HCT116 (cell line): ENCODE measurements at regions of chr6 and their contacts with region 1.

Region 1: DNA sequence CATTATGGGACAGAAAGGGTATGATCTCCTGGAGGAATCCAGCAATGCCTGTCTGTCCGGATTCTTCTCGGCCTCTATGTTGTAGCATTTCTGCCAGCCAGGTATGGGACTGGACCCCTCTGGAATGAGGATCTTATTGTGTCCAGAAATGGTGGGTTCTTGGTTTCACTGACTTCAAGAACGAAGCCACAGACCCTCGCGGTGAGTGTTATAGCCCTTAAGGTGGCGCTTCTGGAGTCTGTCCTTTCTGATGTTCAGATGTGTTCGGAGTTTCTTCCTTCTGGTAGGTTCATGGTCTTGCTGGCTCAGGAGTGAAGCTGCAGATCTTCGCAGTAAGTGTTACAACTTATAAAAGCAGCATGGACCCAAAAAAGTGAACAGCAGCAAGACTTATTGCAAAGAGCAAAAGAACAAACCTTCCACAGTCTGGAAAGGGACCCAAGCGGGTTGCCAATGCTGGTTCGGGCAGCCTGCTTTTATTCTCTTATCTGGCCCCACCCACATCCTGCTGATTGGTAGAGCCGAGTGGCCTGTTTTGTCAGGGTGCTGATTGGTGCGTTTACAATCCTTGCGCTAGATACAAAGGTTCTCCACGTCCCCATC is 62.3 kb upstream of the IER3 start:
- DNase-seq: peak; percentile 78
- ATAC-seq: peak; percentile 26
- H3K4me3 ChIP-seq: peak overlapping the region in 1 of 2 experiments; percentile 27; a peak in 1 of 4 replicates
- H3K27ac ChIP-seq: peak overlapping the region; percentile 69
- H3K4me1 ChIP-seq: peaks cover 55 to 78% of the 10 kb centered on the region in 2 experiments
- H3K27me3 ChIP-seq: no peaks in the 10 kb centered on the region
- CTCF ChIP-seq: no peak
- POLR2A ChIP-seq: peak; percentile 99
- RAD21 ChIP-seq: no peak

Region 2: GRCh38 chr6:30590994-30591393 is 215.7 kb before region 1 on chr6:
- CTCF ChIA-PET with region 1: no interaction called
- POLR2A ChIA-PET with region 1: no interaction called
- RAD21 ChIA-PET with region 1: no interaction called
- intact Hi-C with region 1: no loop called
- DNase-seq: no peak
- ATAC-seq: no peak
- H3K4me3 ChIP-seq: no peak overlapping the region
- H3K27ac ChIP-seq: peak overlapping the region; percentile 41; the same call in 1 of the 2 replicates
- H3K4me1 ChIP-seq: peaks cover 0 to 4% of the 10 kb centered on the region in 2 experiments; a peak in 1 of 4 replicates
- H3K27me3 ChIP-seq: no peaks in the 10 kb centered on the region
- CTCF ChIP-seq: no peak
- POLR2A ChIP-seq: no peak
- RAD21 ChIP-seq: no peak

Region 3: DNA sequence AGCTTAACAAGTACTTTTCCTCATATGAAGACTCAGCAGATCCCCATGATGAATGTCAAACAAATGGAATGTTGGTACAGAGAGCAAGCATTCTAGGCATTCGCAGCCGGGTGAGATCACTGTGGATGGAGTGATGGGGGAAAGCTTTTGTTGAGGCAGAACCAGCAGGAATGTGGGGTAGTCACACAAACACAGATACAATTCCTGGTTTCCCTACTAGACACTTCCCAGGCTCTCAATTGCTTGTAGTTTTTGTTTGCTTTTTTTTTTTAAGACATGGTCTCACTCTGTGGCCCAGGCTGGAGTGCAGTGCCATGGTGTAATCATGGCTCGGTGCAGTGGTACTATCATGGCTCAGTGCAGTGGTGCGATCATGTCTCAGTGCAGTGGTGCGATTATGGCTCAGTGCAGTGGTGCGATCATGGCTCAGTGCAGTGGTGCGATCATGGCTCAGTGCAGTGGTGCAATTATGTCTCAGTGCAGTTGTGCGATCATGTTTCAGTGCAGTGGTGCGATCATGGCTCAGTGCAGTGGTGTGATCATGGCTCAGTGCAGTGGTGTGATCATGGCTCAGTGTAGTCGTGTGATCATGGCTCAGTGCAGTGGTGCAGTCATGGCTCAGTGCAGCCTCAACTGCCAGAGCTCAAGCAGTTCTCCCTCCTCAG is 47.0 kb before region 1 on chr6:
- CTCF ChIA-PET with region 1: no interaction called
- POLR2A ChIA-PET with region 1: interaction called, 171 read pairs
- RAD21 ChIA-PET with region 1: interaction called in 1 of 2 experiments, 4 read pairs
- intact Hi-C with region 1: no loop called
- DNase-seq: no peak
- ATAC-seq: no peak
- H3K4me3 ChIP-seq: no peak overlapping the region
- H3K27ac ChIP-seq: no peak overlapping the region; the same call in 1 of the 2 replicates
- H3K4me1 ChIP-seq: peaks cover 56 to 87% of the 10 kb centered on the region in 2 experiments
- H3K27me3 ChIP-seq: no peaks in the 10 kb centered on the region
- CTCF ChIP-seq: no peak
- POLR2A ChIP-seq: no peak
- RAD21 ChIP-seq: no peak

Region 4: GRCh38 chr6:30787954-30788353 is 18.7 kb before region 1 on chr6:
- CTCF ChIA-PET with region 1: no interaction called
- POLR2A ChIA-PET with region 1: interaction called, 47 read pairs
- RAD21 ChIA-PET with region 1: interaction called in 1 of 2 experiments, 3 read pairs
- intact Hi-C with region 1: no loop called
- DNase-seq: no peak
- ATAC-seq: no peak
- H3K4me3 ChIP-seq: no peak overlapping the region
- H3K27ac ChIP-seq: no peak overlapping the region; the same call in 1 of the 2 replicates
- H3K4me1 ChIP-seq: peaks cover 54 to 82% of the 10 kb centered on the region in 2 experiments
- H3K27me3 ChIP-seq: no peaks in the 10 kb centered on the region
- CTCF ChIP-seq: no peak
- POLR2A ChIP-seq: no peak
- RAD21 ChIP-seq: no peak